Brain microvascular endothelial cell (primary cell): ENCODE measurements at regions of chr1 and their contacts with region 1.

Region 1: GRCh38 chr1:157490467-157491165 is 61.7 kb downstream of the FCRL5 start:
- DNase-seq: peak; percentile 72
- H3K4me3 ChIP-seq: no peak overlapping the region
- H3K27ac ChIP-seq: no peak overlapping the region
- H3K27me3 ChIP-seq: peaks cover 3% of the 10 kb centered on the region
- CTCF ChIP-seq: peak; percentile 81

Region 2: DNA sequence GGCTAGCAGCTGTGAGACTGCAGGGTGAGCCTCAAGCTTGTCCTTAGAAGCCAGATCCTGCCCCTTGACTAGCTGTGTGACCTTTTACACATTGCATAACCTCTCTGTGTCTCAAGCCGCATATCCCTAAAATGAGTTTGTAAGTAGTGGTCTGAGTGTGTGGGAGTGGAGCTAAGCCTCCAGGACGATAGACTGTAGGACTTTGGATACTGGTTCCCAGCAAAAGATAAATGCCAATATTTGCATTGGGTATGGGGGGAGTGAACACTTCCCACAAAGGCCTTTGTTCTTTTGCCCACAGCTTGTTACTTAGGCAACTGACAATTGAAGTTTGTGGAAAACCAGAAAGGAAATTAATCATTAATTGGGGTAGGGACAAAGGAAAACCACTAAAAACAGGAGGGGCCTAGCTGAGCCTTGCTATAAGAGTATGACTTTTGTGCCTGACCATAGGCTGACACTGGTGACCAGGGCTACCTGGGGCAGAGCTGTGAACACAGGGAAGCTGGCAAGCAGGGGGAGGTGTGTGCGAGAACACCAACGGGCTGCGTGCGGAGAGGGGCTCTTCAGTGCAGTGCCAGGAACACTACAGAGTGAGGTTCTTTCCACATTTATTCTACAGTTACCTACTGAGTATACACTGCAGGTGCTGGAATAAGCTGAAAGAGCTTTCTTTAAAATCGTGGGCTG is 250.0 kb before region 1 on chr1:
- in situ Hi-C with region 1: no loop called
- DNase-seq: no peak
- H3K4me3 ChIP-seq: no peak overlapping the region
- H3K27ac ChIP-seq: no peak overlapping the region
- H3K27me3 ChIP-seq: peaks cover 2% of the 10 kb centered on the region
- CTCF ChIP-seq: no peak

Region 3: GRCh38 chr1:157369808-157370521 is 120.7 kb before region 1 on chr1:
- in situ Hi-C with region 1: loop called (anchors 25 kb)
- DNase-seq: peak; percentile 69
- H3K4me3 ChIP-seq: no peak overlapping the region
- H3K27ac ChIP-seq: no peak overlapping the region
- H3K27me3 ChIP-seq: no peaks in the 10 kb centered on the region
- CTCF ChIP-seq: peak; percentile 87